ENCODE measurements at regions of chr7 and their contacts with region 1.

Region 1: GRCh38 chr7:38369816-38370493 is 96.5 kb upstream of the TARP start:
- DNase-seq: peak; percentile 93 to 97 (median 97)
- H3K4me3 ChIP-seq: peak overlapping the region in 2 of 7 experiments; percentile 1 to 39
- H3K27ac ChIP-seq: peak overlapping the region in 1 of 2 experiments; percentile 4
- H3K4me1 ChIP-seq: peaks cover 11 to 41% (median 31%) of the 10 kb centered on the region in 4 experiments
- H3K27me3 ChIP-seq: no peaks in the 10 kb centered on the region

Region 2: GRCh38 chr7:37901236-37901827 is 468.6 kb before region 1 on chr7:
- CTCF ChIA-PET with region 1: interaction called, 50 read pairs
- POLR2A ChIA-PET with region 1: interaction called, 3 read pairs
- DNase-seq: peak; percentile 61 to 81 (median 75)
- H3K4me3 ChIP-seq: no peak overlapping the region
- H3K27ac ChIP-seq: no peak overlapping the region
- H3K4me1 ChIP-seq: no peaks in the 10 kb centered on the region
- H3K27me3 ChIP-seq: no peaks in the 10 kb centered on the region

Region 3: DNA sequence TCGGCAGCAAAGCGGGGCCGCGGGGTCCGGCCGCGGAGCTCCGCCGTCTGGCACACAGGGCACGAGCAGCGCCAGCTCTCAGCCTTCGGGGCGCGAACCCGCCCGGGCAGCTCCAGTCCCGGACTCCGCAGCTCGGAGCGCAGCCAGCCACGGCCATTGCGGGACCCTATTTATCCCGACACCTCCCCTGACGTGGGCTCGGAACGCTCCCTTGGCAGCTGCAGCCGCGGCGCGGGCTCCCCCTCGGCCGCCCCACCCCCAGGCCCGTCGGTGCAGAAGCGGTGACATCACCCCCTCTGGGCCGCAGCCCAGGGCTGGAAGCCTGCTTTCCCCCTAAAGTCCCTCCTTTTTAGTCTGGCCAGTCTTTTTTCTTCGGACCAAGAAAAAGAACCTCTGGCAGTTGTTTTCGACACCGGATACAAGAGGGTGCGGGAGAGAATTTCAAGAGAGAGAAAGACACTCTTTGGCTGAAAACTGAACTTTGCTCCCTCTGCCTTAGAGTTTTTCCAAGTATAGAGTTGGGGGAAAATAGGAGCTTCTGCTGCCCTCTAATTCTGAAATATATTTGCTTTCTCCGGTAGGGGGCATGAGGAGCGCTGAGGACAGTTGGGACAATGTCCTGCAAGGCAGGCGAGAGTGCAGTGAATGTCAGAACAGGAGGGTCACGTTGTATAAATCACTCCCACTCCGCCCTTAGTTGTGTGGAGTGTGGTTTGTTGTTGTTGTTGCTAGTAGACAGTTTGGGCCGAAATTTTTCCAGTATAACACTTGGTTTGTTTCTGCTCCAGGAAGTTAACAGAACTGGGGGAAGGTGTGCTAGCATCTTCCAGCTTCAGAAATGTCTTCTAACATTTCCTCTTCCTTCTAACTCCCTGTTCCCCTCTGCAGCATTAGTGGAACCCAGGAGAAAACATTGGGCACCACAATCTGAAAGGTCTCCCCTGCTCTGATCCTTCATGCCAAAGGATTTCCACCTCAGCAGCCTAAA is 453.0 kb before region 1 on chr7 and contains the start of gene SFRP4:
- CTCF ChIA-PET with region 1: interaction called, 12 read pairs
- POLR2A ChIA-PET with region 1: no interaction called
- DNase-seq: peak; percentile 53 to 63 (median 55)
- H3K4me3 ChIP-seq: peak within 1 kb of the TSS; percentile 38 to 83 (median 63)
- H3K27ac ChIP-seq: no peak within 1 kb of the TSS
- H3K4me1 ChIP-seq: peaks cover 13 to 41% (median 36%) of the 10 kb centered on the region in 4 experiments
- H3K27me3 ChIP-seq: peaks cover 0 to 12% (median 0%) of the 10 kb centered on the region in 5 experiments

Region 4: GRCh38 chr7:38222481-38223096 is 147.4 kb before region 1 on chr7:
- CTCF ChIA-PET with region 1: interaction called, 80 read pairs
- POLR2A ChIA-PET with region 1: no interaction called
- DNase-seq: peak; percentile 66 to 78 (median 71)
- H3K4me3 ChIP-seq: no peak overlapping the region
- H3K27ac ChIP-seq: peak overlapping the region in 1 of 2 experiments; percentile 52
- H3K4me1 ChIP-seq: peaks cover 0 to 16% (median 6%) of the 10 kb centered on the region in 4 experiments
- H3K27me3 ChIP-seq: no peaks in the 10 kb centered on the region

Region 5: GRCh38 chr7:38248069-38248567 is 121.8 kb before region 1 on chr7:
- CTCF ChIA-PET with region 1: no interaction called
- POLR2A ChIA-PET with region 1: no interaction called
- DNase-seq: no peak
- H3K4me3 ChIP-seq: no peak overlapping the region
- H3K27ac ChIP-seq: no peak overlapping the region
- H3K4me1 ChIP-seq: no peaks in the 10 kb centered on the region
- H3K27me3 ChIP-seq: no peaks in the 10 kb centered on the region

Region 6: DNA sequence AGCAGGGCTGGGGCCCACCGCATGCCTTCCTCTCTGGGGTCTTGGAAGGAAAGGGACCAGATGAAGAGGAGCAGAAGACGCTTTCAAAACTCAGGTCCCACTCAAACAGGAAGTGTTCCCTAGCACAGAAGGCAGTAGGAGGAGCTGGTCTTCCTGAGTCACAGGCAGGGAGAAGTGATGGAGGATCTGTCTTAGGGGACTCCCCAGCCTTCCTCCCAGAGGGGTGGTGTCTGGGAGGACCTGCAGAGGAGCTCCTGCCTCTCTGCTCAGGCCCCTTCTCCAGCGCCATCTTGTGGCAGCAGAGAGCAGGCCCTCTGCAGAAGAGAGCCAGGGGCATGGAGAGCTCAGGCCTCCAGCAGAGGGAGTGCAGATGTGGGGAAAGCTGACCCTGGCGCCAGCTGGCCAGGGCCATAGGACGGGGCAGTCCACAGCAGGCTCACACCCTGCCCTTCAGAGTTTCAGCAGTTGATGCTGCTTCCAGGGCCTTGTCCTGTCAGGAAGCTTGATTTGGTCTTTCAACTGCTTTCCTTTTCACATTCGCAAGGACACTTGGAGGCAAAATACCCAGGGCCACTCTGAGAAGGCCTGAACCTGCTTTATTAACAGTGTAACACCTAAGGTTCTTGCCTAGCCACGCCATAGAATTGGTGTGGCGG is 34.3 kb before region 1 on chr7:
- CTCF ChIA-PET with region 1: interaction called, 82 read pairs
- POLR2A ChIA-PET with region 1: no interaction called
- DNase-seq: peak; percentile 89 to 92 (median 91)
- H3K4me3 ChIP-seq: peak overlapping the region in 4 of 7 experiments; percentile 17 to 65 (median 40)
- H3K27ac ChIP-seq: peak overlapping the region in 1 of 2 experiments; percentile 77
- H3K4me1 ChIP-seq: peaks cover 30 to 59% (median 44%) of the 10 kb centered on the region in 4 experiments
- H3K27me3 ChIP-seq: no peaks in the 10 kb centered on the region

Region 7: DNA sequence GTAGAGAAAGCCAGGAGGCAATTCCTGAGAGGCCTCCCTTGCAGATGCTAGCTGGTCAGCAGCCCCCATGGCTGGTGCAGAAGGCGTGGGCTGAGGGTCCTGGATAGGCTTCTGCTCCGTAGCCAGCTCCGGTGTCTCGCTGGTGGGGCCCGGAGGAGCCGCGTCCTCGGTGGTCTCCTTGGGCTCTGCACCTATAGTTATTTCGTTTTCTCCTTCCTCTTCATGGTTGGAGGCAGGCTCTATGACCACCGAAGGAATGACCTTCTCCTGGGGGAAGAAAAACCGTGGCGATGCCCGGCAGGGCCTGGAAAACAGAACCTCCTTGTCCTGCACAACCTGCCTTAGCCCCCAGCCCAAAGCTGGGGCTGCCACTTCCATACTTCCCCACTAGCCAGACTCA is 21.8 kb after region 1 on chr7:
- CTCF ChIA-PET with region 1: interaction called, 45 read pairs
- POLR2A ChIA-PET with region 1: no interaction called
- DNase-seq: no peak
- H3K4me3 ChIP-seq: no peak overlapping the region
- H3K27ac ChIP-seq: no peak overlapping the region
- H3K4me1 ChIP-seq: peaks cover 3 to 42% (median 26%) of the 10 kb centered on the region in 4 experiments
- H3K27me3 ChIP-seq: no peaks in the 10 kb centered on the region

Region 8: GRCh38 chr7:38463277-38464225 is 93.6 kb after region 1 on chr7:
- CTCF ChIA-PET with region 1: no interaction called
- POLR2A ChIA-PET with region 1: no interaction called
- DNase-seq: peak; percentile 39 to 86 (median 72)
- H3K4me3 ChIP-seq: peak overlapping the region in 1 of 7 experiments; percentile 32
- H3K27ac ChIP-seq: no peak overlapping the region
- H3K4me1 ChIP-seq: peaks cover 0 to 4% (median 1%) of the 10 kb centered on the region in 4 experiments
- H3K27me3 ChIP-seq: no peaks in the 10 kb centered on the region

Region 9: GRCh38 chr7:38502294-38502693 is 132.3 kb after region 1 on chr7:
- CTCF ChIA-PET with region 1: no interaction called
- POLR2A ChIA-PET with region 1: no interaction called
- DNase-seq: no peak
- H3K4me3 ChIP-seq: no peak overlapping the region
- H3K27ac ChIP-seq: no peak overlapping the region
- H3K4me1 ChIP-seq: no peaks in the 10 kb centered on the region
- H3K27me3 ChIP-seq: peaks cover 0 to 4% (median 0%) of the 10 kb centered on the region in 5 experiments

Measured in common myeloid progenitor, CD34-positive (primary cell).